Common myeloid progenitor, CD34-positive (primary cell): ENCODE measurements at regions of chr12 and their contacts with region 1.

Region 1: DNA sequence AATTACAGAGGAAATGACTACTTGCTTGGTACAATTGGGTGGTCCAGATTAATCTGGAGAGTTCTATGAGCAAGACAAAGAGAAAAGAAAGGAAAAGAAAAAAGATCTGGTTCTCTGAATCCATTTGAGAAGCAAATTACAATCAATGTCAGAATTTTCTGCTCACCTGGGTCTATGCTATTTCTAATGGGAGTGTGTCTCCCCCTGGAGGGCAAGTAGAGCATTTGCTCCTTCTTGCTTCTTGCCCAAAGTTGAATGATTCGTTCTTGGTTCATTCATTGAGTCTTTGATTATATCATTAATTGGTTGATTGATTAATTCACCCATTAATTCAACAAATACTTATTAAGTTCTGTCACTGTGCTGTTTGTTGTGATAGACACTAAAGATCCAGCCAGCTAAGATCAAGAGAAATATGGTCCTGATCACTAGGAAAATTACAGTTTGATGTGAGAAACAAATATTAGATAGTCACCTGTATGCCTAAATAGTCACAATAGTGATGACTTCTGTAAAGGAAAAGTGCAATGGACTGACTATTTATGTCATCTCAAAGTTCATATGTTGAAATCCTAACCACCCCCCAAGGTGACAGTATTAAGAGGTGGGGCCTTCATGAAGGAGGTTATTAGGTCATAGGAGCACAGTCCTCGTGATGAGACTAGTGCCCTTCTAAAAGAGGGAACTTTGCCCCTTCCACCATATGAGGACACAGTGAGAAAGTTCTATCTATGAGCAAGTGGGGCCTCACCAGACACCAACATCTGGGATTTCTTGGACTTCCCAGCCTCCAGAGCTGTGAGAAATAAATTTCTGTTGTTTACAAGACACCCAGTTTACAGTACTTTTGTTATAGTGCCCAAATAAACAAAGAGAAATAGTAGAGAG is 8.0 kb upstream of the ASB8 start:
- DNase-seq: peak; percentile 78 to 91 (median 84)
- H3K4me3 ChIP-seq: no peak overlapping the region
- H3K27ac ChIP-seq: no peak overlapping the region
- H3K4me1 ChIP-seq: peaks cover 10 to 18% (median 16%) of the 10 kb centered on the region in 4 experiments
- H3K27me3 ChIP-seq: no peaks in the 10 kb centered on the region

Region 2: GRCh38 chr12:48078901-48079300 is 86.4 kb before region 1 on chr12:
- CTCF ChIA-PET with region 1: interaction called, 57 read pairs
- POLR2A ChIA-PET with region 1: no interaction called
- DNase-seq: no peak
- H3K4me3 ChIP-seq: no peak overlapping the region
- H3K27ac ChIP-seq: no peak overlapping the region
- H3K4me1 ChIP-seq: no peaks in the 10 kb centered on the region
- H3K27me3 ChIP-seq: no peaks in the 10 kb centered on the region

Region 3: DNA sequence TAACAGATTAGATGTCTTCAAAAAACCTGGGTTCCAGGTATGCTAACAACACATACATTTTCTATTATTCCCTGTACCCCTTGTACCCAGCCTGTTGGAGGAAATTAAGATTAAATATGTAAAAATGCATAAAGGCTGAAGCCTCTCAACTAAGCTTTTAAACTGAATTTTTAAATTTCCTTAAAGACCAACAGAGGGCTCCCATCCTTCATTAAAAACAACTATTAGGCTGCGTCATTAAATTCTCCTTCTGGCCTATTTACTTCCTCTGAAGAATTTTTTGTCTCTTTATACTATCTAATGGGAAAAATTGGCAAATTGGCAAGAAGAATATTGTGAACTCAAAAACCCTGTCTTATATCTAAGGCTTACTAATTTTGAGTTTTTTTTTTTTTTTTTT is 81.3 kb before region 1 on chr12:
- CTCF ChIA-PET with region 1: interaction called, 57 read pairs
- POLR2A ChIA-PET with region 1: no interaction called
- DNase-seq: peak; percentile 47 to 67 (median 67)
- H3K4me3 ChIP-seq: no peak overlapping the region
- H3K27ac ChIP-seq: no peak overlapping the region
- H3K4me1 ChIP-seq: no peaks in the 10 kb centered on the region
- H3K27me3 ChIP-seq: no peaks in the 10 kb centered on the region

Region 4: DNA sequence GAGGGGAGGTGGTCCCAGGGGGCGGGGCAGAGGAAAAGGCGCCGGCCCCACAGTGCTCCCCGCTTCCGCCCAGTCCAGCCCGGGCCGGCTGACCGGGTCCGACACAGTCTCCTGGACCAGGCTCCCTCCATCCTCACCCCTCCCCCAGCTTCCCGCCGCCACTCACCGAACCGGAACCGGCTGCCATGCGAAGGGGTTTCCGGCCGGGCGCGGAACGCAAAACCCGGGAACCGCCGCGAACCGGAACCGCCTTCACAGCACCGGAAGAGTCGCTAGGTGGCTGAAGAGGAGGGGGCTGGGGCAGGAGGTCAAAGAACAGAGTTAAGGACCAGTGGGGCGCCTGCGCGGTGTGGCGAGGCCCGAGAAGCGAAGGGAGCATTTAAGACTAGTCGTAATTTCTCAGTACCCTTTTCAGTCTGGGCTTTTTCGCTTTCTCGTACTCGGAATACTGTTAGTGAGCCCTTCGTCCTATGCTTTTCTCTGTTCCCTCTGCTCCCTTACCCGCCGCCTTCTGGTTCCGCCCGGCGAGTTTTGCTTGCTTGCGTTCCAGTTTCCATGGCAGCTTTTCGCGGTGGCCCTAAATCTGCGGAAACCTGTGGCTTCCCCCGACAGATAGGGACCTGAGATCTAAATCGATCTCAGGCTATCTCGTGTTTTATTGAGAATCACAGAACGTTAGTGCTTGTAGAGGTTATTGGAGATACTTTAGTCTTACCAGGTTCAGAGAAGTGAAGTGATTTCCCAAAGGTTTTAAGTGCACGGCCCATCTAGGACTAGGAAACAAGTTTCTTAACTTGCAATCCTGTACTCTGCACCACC is 59.3 kb before region 1 on chr12 and contains the start of gene SENP1:
- CTCF ChIA-PET with region 1: interaction called, 13 read pairs
- POLR2A ChIA-PET with region 1: interaction called, 3 read pairs
- DNase-seq: peak; percentile 89 to 93 (median 92)
- H3K4me3 ChIP-seq: peak within 1 kb of the TSS; percentile 77 to 98 (median 90)
- H3K27ac ChIP-seq: peak within 1 kb of the TSS; percentile 98 to 99
- H3K4me1 ChIP-seq: peaks cover 7 to 21% (median 19%) of the 10 kb centered on the region in 4 experiments
- H3K27me3 ChIP-seq: no peaks in the 10 kb centered on the region

Region 5: DNA sequence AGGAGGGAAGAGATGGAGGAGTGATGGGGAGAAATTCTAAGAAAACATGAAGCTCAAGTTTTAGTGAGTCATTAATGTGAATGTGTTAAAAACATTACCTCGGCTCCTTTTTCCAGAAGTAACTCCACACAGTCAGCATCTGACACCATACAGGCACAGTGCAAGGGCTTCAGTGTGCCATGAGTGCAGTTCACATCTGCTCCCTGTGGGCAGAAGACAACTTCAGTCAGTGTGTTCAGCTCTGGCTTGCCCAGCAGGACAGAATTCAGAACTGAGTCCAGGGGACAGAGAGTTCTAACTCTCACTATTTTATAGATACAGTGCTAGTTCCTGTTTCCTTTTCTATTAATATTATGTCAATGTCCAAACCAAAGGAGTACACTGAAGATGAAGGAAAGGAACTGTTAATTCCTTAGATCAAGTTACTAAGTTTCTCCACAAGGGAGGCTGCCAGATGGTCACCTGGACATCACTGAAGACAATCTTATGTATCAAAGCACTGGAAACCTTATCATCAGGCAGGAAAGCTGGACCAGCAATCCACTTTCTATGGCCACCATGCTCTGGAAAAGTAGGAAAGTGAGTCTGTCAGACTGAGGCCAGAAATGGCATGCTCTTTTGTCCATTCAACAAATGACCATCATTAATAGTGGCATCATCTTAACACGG is 14.1 kb before region 1 on chr12:
- CTCF ChIA-PET with region 1: interaction called, 13 read pairs
- POLR2A ChIA-PET with region 1: no interaction called
- DNase-seq: no peak
- H3K4me3 ChIP-seq: no peak overlapping the region
- H3K27ac ChIP-seq: no peak overlapping the region
- H3K4me1 ChIP-seq: peaks cover 1 to 3% (median 2%) of the 10 kb centered on the region in 4 experiments
- H3K27me3 ChIP-seq: no peaks in the 10 kb centered on the region